Common myeloid progenitor, CD34-positive (primary cell): ENCODE measurements at regions of chr11 and their contacts with region 1.

Region 1: GRCh38 chr11:16804104-16804947 is 65.9 kb downstream of the C11orf58 start:
- DNase-seq: no peak
- H3K4me3 ChIP-seq: no peak overlapping the region
- H3K27ac ChIP-seq: no peak overlapping the region
- H3K4me1 ChIP-seq: peaks cover 6 to 52% (median 27%) of the 10 kb centered on the region in 4 experiments
- H3K27me3 ChIP-seq: no peaks in the 10 kb centered on the region

Region 2: GRCh38 chr11:16815043-16815767 is 10.9 kb after region 1 on chr11:
- CTCF ChIA-PET with region 1: interaction called, 10 read pairs
- POLR2A ChIA-PET with region 1: no interaction called
- DNase-seq: peak in 1 of 3 donors; percentile 35
- H3K4me3 ChIP-seq: no peak overlapping the region
- H3K27ac ChIP-seq: no peak overlapping the region
- H3K4me1 ChIP-seq: peaks cover 6 to 49% (median 15%) of the 10 kb centered on the region in 4 experiments
- H3K27me3 ChIP-seq: no peaks in the 10 kb centered on the region

Region 3: GRCh38 chr11:16935518-16936302 is 131.4 kb after region 1 on chr11:
- CTCF ChIA-PET with region 1: no interaction called
- POLR2A ChIA-PET with region 1: no interaction called
- DNase-seq: peak; percentile 40 to 70 (median 64)
- H3K4me3 ChIP-seq: no peak overlapping the region
- H3K27ac ChIP-seq: no peak overlapping the region
- H3K4me1 ChIP-seq: no peaks in the 10 kb centered on the region
- H3K27me3 ChIP-seq: peaks cover 0 to 11% (median 0%) of the 10 kb centered on the region in 5 experiments